AG04450 (cell line): ENCODE measurements at regions of chr4 and their contacts with region 1.

Region 1: GRCh38 chr4:93791570-93792195 is 36.9 kb upstream of the ATOH1 start:
- DNase-seq: peak; percentile 11
- H3K4me3 ChIP-seq: no peak overlapping the region
- H3K27ac ChIP-seq: no peak overlapping the region
- H3K27me3 ChIP-seq: no peaks in the 10 kb centered on the region
- CTCF ChIP-seq: peak; percentile 91

Region 2: GRCh38 chr4:93561842-93562241 is 229.8 kb before region 1 on chr4:
- CTCF ChIA-PET with region 1: no interaction called
- POLR2A ChIA-PET with region 1: no interaction called
- DNase-seq: no peak
- H3K4me3 ChIP-seq: no peak overlapping the region
- H3K27ac ChIP-seq: no peak overlapping the region
- H3K27me3 ChIP-seq: no peaks in the 10 kb centered on the region
- CTCF ChIP-seq: no peak

Region 3: DNA sequence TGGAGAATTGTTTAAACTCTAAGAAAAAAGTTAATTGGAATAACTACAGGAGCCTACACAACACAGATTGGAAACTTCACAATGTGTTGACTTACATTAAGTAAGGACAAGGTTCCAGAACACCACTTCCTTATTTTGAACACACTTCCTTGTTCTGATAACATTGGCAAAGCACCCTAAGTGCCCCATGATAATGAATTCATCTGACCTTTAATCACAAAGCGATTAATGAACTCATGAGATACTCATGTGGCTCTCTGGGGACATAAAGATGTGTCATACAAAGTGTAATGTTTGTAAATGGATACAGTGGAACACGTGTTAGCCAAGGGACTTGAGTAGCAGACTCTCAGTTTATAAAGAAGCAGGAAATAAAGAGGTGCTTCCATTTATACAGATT is 32.2 kb before region 1 on chr4:
- CTCF ChIA-PET with region 1: no interaction called
- POLR2A ChIA-PET with region 1: no interaction called
- DNase-seq: no peak
- H3K4me3 ChIP-seq: no peak overlapping the region
- H3K27ac ChIP-seq: no peak overlapping the region
- H3K27me3 ChIP-seq: no peaks in the 10 kb centered on the region
- CTCF ChIP-seq: no peak

Region 4: DNA sequence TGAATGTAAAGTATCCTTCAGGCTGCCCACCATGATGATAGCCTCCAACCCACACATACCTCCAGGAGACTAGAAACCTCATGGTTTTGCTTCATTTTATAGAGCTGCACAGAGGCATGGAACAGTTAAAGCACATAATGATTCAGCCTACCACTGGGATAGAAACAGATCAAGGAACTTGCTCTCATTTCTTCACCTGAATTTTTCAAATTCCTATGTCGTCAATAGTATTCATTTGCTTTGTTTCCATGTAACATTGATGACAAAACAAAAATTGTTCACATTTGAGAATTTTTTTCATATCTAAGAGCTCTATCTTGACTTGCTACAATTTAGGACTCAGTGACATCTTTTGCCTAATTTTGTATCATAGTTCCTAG is 14.6 kb before region 1 on chr4:
- CTCF ChIA-PET with region 1: interaction called, 12 read pairs
- POLR2A ChIA-PET with region 1: no interaction called
- DNase-seq: no peak
- H3K4me3 ChIP-seq: no peak overlapping the region
- H3K27ac ChIP-seq: no peak overlapping the region
- H3K27me3 ChIP-seq: no peaks in the 10 kb centered on the region
- CTCF ChIP-seq: no peak

Region 5: DNA sequence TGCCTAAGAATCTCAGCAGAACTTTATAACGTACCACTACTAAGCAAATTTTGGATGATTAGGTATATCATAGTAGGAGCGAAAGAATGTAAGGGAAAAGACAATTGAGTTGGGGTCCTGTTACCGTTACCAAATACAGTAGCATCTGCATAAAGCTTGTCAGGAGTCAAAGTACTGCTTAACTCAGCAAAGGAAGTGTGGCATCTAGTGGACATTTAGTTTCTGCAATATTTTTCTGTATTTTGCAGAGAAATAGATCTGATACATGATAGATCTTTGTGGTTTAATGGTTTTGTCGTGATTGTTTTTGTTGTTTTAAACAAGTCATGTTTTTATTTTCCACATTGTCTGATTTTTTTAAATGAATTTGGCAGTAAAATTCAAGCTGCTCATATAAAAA is 335.0 kb after region 1 on chr4:
- CTCF ChIA-PET with region 1: interaction called, 11 read pairs
- POLR2A ChIA-PET with region 1: no interaction called
- DNase-seq: no peak
- H3K4me3 ChIP-seq: no peak overlapping the region
- H3K27ac ChIP-seq: no peak overlapping the region
- H3K27me3 ChIP-seq: no peaks in the 10 kb centered on the region
- CTCF ChIP-seq: peak; percentile 23; the same call in 1 of the 2 replicates